Naive thymus-derived CD8-positive, alpha-beta T cell (primary cell): ENCODE measurements at regions of chr16 and their contacts with region 1.

Region 1: DNA sequence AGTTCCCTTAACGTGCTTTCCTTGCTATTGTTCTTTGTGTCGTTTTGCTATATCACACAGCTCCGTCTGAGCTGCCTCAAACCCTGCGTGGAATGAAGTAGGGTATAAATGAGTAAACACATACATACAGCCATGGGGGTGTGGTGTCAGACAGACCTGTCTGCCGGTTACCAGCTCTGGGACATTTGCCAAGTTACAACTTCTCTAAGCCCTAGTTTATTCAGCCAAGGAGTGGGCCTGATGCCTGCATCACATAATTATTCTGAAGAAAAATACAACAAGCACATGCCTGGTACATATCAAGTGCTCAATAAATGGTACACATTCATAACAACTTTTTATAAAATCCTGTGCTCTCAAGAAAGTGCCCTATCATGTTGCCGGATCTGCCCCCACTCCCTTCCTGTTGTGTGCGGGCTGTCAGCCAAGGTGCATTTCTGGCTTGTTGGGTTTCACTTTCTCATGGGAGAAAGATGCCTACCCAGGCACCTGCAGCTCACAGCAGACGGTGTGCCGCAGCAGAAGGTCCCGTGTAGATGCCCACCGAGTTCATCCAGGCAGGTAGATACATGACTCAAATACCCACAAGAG is 30.5 kb downstream of the SMPD3 start:
- DNase-seq: peak; percentile 44 to 88 (median 74)
- ATAC-seq: peak; percentile 92
- H3K4me3 Mint-ChIP-seq: peak overlapping the region; percentile 75 to 87 (median 84)
- H3K27ac Mint-ChIP-seq: peak overlapping the region; percentile 94 to 99 (median 96)
- H3K4me1 Mint-ChIP-seq: peaks cover 39 to 57% (median 47%) of the 10 kb centered on the region in 4 donors
- H3K27me3 Mint-ChIP-seq: no peaks in the 10 kb centered on the region

Region 2: GRCh38 chr16:68369697-68370580 is 47.9 kb before region 1 on chr16:
- POLR2A ChIA-PET with region 1: interaction called, 24 read pairs
- DNase-seq: peak in 3 of 10 donors; percentile 18 to 33 (median 27)
- ATAC-seq: peak; percentile 35 to 38
- H3K4me3 Mint-ChIP-seq: peak overlapping the region; percentile 25 to 82 (median 66)
- H3K27ac Mint-ChIP-seq: peak overlapping the region; percentile 19 to 88 (median 62)
- H3K4me1 Mint-ChIP-seq: peaks cover 28 to 72% (median 53%) of the 10 kb centered on the region in 4 donors
- H3K27me3 Mint-ChIP-seq: peaks cover 3 to 27% (median 3%) of the 10 kb centered on the region in 5 donors

Region 3: GRCh38 chr16:68434624-68435197 is 16.9 kb after region 1 on chr16:
- POLR2A ChIA-PET with region 1: interaction called, 22 read pairs
- DNase-seq: no peak
- ATAC-seq: no peak
- H3K4me3 Mint-ChIP-seq: peak overlapping the region in 1 of 10 donors; percentile 23
- H3K27ac Mint-ChIP-seq: peak overlapping the region in 6 of 10 donors; percentile 7 to 63 (median 44)
- H3K4me1 Mint-ChIP-seq: peaks cover 7 to 20% (median 11%) of the 10 kb centered on the region in 4 donors
- H3K27me3 Mint-ChIP-seq: peaks cover 0 to 4% (median 2%) of the 10 kb centered on the region in 5 donors

Region 4: DNA sequence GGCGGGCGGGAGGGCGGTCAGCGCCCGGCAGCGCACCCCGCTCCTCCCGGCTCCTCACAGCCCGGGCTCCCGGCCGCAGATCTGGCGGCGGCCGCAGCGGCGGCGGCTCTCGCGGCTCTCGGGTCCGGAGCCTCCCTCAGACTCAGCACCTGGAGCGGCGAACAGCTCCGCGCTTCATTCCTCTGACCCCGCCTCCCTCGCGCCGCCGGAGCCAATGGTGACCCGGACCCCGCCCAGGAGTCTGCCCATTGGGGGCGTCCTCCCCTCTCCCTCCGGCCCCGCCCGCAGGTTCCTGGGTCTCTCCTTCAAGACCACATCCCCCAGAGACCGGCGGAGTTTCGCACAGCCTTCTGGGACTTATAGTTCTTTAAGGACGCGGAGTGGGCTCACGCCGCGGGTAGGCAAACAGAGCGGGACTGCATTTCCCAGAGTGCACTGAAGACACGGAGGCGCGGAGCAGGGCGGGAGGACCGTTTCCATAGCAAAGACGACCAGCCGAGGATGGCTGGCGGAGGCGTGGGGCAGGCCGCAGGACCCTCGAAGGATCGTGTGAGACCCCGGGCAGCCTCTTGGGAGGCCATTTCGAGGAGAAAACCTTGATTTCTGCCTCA is 30.7 kb after region 1 on chr16 and contains the start of gene SMPD3:
- POLR2A ChIA-PET with region 1: interaction called, 11 read pairs
- DNase-seq: peak; percentile 94 to 99 (median 97)
- ATAC-seq: peak; percentile 95 to 97
- H3K4me3 Mint-ChIP-seq: peak within 1 kb of the TSS; percentile 64 to 89 (median 78)
- H3K27ac Mint-ChIP-seq: peak within 1 kb of the TSS in 6 of 10 donors; percentile 4 to 71 (median 54)
- H3K4me1 Mint-ChIP-seq: peaks cover 8 to 27% (median 18%) of the 10 kb centered on the region in 4 donors
- H3K27me3 Mint-ChIP-seq: peaks cover 14 to 44% (median 29%) of the 10 kb centered on the region in 5 donors
- polyA plus RNA-seq, gene SMPD3: 0.80 to 3.5 (median 0.94) TPM

Region 5: DNA sequence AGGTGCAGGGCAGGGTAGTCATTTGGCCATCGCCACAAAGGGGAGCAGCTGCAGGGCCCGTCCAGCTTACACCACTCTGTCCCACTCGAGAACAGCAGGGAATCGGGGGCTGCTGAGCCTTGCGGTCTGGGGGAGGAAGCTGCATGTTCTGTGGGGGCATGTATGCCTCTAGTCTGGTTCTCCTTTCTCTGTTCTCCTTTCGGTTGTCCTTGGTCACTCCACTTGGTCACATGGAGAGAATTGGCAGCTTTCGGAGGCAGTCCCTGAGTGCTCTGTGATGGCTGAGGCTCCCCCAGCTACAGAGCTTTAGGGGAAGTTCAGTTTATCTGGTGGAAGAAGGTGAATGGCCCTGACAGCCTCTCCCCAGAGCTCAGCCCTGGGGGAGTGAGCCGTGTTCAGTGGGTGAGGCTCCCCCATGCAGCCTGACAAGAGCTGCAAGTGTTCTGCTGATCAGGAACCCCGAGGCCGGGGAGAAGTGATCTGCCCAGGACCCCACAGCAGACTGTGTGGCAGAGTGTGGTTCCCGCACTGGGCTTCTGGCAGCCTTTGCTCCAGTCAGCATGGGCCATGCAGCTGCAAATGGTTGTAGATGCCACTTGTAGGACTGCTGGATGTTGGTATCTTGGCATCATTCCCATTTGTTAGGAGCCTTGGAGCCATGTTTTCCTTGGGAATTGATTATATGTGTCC is 52.8 kb after region 1 on chr16:
- POLR2A ChIA-PET with region 1: interaction called, 21 read pairs
- DNase-seq: peak in 5 of 10 donors; percentile 19 to 39 (median 25)
- ATAC-seq: peak; percentile 65 to 83
- H3K4me3 Mint-ChIP-seq: peak overlapping the region; percentile 79 to 96 (median 89)
- H3K27ac Mint-ChIP-seq: peak overlapping the region; percentile 74 to 97 (median 89)
- H3K4me1 Mint-ChIP-seq: peaks cover 18 to 62% (median 51%) of the 10 kb centered on the region in 4 donors
- H3K27me3 Mint-ChIP-seq: no peaks in the 10 kb centered on the region